Heart right ventricle (tissue), 16 donors: ENCODE measurements at regions of chrX and their contacts with region 1.

Region 1: GRCh38 chrX:22748093-22748999 is 251.4 kb upstream of the DDX53 start:
- DNase-seq: peak; percentile 12 to 21
- ATAC-seq: peak; percentile 52 to 89 (median 76)
- H3K4me3 ChIP-seq: no peak overlapping the region
- H3K27ac ChIP-seq: no peak overlapping the region
- H3K4me1 ChIP-seq: no peaks in the 10 kb centered on the region
- H3K27me3 ChIP-seq: no peaks in the 10 kb centered on the region
- CTCF ChIP-seq: peak; percentile 16 to 77 (median 64)

Region 2: GRCh38 chrX:22135994-22136684 is 612.2 kb before region 1 on chrX:
- intact Hi-C with region 1: loop called in 5 of 10 experiments (anchors 5 to 10 kb)
- DNase-seq: peak in 1 of 2 donors; percentile 5
- ATAC-seq: peak in 3 of 8 donors; percentile 14 to 56 (median 16)
- H3K4me3 ChIP-seq: no peak overlapping the region
- H3K27ac ChIP-seq: peak overlapping the region in 2 of 10 donors; percentile 40 to 50
- H3K4me1 ChIP-seq: peaks cover 0 to 9% (median 0%) of the 10 kb centered on the region in 9 donors
- H3K27me3 ChIP-seq: peaks cover 0 to 23% (median 0%) of the 10 kb centered on the region in 7 donors
- CTCF ChIP-seq: peak; percentile 46 to 81 (median 65)